ENCODE measurements at regions of chr22 and their contacts with region 1.

Region 1: DNA sequence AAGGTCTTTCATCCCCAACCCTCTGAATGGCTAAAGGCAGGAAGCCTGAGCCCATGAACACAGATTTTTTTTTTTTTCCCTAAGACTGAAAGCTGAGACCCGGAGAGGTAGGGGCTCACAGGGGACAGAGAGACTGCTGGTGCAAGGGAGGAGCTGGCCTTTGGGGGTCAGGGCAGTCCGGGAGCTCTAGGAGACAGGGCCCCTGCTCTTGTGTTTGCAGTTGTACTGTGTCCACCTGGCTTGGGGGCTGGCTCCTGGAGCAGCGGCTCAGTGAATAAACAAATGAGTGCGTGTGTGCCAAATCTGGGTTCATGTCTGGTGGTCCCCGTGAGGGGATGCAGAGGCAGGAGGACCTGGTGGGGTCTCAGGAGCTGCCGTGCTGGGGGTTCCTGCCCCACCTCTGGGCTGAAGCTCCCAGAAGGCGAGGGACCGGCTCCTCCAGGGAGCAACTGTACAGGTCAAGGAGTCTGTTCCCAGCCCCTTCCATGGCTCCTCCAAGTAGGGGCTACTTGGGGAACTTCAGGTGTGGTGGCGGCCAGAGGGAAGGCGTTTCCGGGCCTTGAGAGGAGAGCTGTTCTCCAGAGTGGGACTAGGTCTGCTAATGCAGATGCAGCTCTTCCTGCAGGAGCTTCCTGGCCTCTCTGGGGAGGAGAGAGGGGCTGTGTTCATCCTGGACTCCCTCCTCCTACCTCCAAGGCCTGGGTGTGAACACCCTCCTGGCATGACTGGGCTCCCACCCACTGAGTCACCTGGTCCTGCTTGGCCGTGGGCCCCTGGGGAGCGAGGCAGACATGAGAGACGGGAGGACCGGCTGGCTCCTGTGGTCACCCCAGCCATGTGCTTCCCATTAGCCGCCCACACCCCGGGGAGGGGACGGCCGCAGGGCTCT is 57.6 kb downstream of the FBXO7 start:
- DNase-seq: peak in 4 of 6 donors; percentile 25 to 56 (median 42)
- ATAC-seq: peak in 3 of 4 donors; percentile 37 to 43 (median 37)
- H3K4me3 ChIP-seq: no peak overlapping the region
- H3K27ac ChIP-seq: peak overlapping the region; percentile 3 to 25 (median 6)
- H3K4me1 ChIP-seq: peaks cover 0 to 4% (median 0%) of the 10 kb centered on the region in 3 donors
- H3K27me3 ChIP-seq: no peaks in the 10 kb centered on the region
- CTCF ChIP-seq: no peak

Region 2: DNA sequence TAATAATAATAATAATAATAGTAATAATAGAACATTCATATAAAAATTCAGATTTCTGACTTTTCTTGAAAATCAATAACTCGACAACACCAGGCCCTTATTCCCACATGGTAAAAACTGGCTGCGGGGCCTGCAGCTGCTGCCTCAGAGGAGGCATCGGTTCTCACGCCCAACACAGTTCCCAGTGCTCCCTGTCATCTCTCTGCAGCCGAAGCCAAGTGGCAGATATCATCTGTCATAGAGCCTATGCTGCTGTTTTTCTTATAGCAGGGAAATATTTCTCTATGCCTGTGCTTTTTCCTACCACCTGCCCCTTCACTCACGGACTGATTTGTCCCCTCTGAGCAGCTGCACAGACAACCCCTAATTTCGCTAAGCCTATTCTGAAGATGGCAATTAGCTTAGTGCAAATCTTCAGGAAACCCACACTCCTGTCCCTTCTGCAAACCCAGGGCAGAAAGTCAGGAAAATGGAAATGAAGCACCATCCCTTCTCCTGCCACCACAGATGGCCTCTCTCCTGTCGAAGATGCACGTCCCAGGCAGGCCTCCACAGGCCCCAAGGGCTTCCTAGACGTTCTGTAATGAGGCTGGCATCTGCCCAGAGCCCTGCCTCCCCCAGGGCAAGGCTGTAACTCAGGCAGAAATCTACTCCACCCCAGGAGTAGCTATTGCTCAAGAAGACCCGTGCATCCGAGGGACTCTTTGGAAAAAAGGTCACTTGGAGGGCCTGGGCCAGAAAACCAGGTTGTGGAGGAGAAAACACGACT is 459.4 kb after region 1 on chr22:
- intact Hi-C with region 1: loop called in 1 of 3 experiments (anchors 10 kb)
- DNase-seq: no peak
- ATAC-seq: peak in 1 of 4 donors; percentile 51
- H3K4me3 ChIP-seq: no peak overlapping the region
- H3K27ac ChIP-seq: no peak overlapping the region
- H3K4me1 ChIP-seq: no peaks in the 10 kb centered on the region
- H3K27me3 ChIP-seq: no peaks in the 10 kb centered on the region
- CTCF ChIP-seq: no peak